Heart right ventricle (tissue), 16 donors: ENCODE measurements at regions of chr3 and their contacts with region 1.

Region 1: GRCh38 chr3:41893977-41894376 is 67.9 kb downstream of the ULK4 start:
- DNase-seq: peak in 1 of 2 donors; percentile 22
- ATAC-seq: no peak
- H3K4me3 ChIP-seq: no peak overlapping the region
- H3K27ac ChIP-seq: no peak overlapping the region
- H3K4me1 ChIP-seq: peaks cover 0 to 13% (median 0%) of the 10 kb centered on the region in 9 donors
- H3K27me3 ChIP-seq: no peaks in the 10 kb centered on the region
- CTCF ChIP-seq: peak in 8 of 9 donors; percentile 33 to 73 (median 60)

Region 2: DNA sequence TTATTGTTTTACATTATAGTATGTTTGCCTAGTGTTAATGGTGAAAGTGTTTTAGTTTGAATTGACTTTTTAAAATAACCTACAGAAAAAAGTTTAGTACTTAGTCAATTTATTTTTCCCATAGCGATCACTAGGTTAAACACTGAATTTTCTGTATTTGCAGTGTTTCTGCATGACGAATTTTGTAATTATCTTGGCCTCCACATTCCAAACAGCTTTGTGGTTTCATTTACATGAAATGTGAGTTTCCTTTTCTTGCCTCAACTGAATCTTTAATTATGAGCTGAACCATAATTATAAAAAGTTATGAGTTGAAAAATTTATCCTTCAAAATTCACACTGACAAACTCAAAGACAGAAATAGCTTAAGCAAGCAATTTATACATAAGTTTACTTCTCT is 459.2 kb before region 1 on chr3:
- intact Hi-C with region 1: no loop called
- DNase-seq: no peak
- ATAC-seq: no peak
- H3K4me3 ChIP-seq: no peak overlapping the region
- H3K27ac ChIP-seq: no peak overlapping the region
- H3K4me1 ChIP-seq: no peaks in the 10 kb centered on the region
- H3K27me3 ChIP-seq: no peaks in the 10 kb centered on the region
- CTCF ChIP-seq: no peak

Region 3: DNA sequence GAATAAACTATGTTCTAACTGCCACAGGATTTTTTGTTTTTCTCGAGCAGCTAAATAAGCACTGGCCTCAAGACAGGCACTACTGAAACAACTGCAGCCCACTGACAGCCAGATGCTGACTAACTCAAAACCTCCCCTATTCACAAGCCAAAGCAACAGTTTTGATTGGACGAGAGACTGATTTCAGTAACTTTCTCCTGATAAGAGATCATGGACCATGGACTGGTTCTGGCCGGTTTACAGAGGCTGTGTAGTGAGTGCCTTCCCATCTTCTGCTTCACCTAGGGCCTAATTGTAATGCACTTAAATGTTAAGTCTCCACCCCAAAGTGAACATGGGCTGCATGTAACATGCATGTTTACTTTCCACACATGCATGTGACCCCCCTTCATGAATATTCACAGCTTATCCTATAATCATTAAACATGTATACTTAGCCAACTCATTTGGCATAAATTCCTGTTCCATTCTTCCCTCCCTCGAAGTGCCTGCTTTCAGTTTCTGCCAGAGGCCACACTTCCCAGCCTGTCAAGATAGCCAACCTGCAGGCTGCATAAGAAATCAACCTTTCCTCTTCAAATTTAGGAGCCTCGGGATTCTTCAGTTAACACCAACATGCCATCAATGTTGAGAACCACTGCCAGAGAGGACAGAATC is 40.3 kb before region 1 on chr3:
- intact Hi-C with region 1: no loop called
- DNase-seq: no peak
- ATAC-seq: no peak
- H3K4me3 ChIP-seq: no peak overlapping the region
- H3K27ac ChIP-seq: no peak overlapping the region
- H3K4me1 ChIP-seq: peaks cover 0 to 3% (median 0%) of the 10 kb centered on the region in 9 donors
- H3K27me3 ChIP-seq: no peaks in the 10 kb centered on the region
- CTCF ChIP-seq: no peak

Region 4: DNA sequence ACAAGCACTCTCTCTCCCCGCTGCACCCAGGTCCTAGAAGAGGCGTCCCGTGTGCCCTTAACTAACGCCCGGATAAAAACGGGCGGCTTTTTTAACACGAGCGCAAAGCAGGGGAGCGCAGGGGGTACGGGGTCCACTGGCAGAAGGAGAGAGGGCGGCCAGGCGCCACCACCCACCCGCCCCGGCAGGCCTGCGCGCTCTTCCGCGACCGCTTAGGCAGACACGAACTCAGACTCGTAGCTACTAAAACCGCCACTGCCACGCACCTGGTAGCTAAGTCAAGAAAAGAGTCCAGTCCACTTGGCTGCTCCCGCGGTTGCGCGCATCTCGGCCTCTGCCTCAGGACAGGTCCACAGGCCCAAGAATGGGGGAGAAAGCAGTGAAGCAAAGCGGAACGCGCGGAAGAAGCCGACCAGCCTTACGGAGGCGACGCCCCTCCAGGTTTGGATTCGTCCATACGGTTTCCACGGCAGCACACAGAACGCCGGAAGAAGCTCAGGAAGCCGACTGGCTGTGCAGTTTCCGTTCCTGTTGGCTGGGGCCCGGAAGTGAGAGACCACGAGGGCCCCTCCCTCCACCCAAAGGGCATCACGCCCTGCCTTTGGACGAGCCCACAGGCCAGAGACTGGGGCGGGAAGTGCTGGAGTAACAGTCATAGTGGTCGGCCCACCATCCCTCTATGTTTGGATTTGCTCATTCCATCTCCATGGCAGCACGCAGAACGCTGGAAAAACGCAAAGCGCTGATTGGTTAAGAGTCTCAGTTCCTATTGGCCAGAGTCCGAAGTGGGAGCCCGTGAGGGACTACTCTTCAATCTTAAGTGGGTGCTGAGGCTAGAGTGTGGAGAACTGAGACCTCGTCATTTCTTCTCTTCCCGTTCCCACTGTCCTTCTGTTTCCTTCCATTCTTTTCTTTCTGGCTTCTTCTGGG is 68.0 kb after region 1 on chr3 and contains the start of gene ULK4:
- intact Hi-C with region 1: no loop called
- DNase-seq: peak; percentile 95 to 98
- ATAC-seq: peak; percentile 97 to 99 (median 98)
- H3K4me3 ChIP-seq: peak within 1 kb of the TSS; percentile 78 to 97 (median 93)
- H3K27ac ChIP-seq: peak within 1 kb of the TSS in 9 of 10 donors; percentile 46 to 87 (median 75)
- H3K4me1 ChIP-seq: peaks cover 0 to 18% (median 12%) of the 10 kb centered on the region in 9 donors
- H3K27me3 ChIP-seq: no peaks in the 10 kb centered on the region
- CTCF ChIP-seq: no peak
- total RNA-seq, gene ULK4: 1.8 to 11.4 (median 2.9) TPM

Region 5: GRCh38 chr3:42184651-42185443 is 290.9 kb after region 1 on chr3:
- intact Hi-C with region 1: loop called in 9 of 10 experiments (anchors 2 to 10 kb)
- DNase-seq: no peak
- ATAC-seq: no peak
- H3K4me3 ChIP-seq: no peak overlapping the region
- H3K27ac ChIP-seq: peak overlapping the region in 2 of 10 donors; percentile 9 to 30
- H3K4me1 ChIP-seq: peaks cover 0 to 87% (median 58%) of the 10 kb centered on the region in 9 donors
- H3K27me3 ChIP-seq: no peaks in the 10 kb centered on the region
- CTCF ChIP-seq: no peak

Region 6: DNA sequence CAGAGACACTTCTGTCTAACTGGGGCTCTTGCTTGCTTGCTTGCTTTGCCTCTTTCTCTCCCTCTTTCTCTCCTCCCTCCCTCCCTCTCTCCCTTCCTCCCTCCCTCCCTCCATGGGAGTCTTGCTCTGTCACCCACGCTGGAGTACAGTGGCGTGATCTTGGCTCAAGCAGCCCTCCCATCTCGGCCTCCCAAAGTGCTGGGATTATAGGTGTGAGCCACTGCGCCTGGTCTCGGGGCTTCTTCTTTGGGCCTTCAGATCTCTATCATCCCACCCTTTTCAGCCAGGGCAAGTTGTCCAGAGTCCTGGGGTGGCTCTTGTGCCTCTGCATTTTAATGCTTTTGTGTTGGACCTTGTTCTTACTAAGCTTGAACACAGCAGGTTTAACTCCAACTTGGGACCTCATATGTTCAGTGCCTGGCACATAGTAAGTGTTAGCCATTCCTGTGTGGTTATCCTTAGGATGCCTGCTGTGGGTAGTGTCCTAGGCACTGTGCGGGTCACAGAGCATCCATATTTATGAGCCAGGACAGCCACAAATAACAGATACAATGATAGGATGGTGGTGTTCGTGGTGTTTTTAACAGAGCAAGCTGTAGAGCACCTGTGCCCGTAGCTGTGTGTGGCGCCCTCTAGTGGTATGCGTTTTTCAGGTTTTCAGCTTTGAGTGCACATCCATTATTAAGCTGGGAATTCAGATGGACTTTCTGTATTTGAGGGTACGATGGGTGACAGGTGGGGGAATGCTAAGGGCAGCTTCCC is 296.9 kb after region 1 on chr3:
- intact Hi-C with region 1: loop called in 9 of 10 experiments (anchors 2 to 10 kb)
- DNase-seq: peak in 1 of 2 donors; percentile 72
- ATAC-seq: peak; percentile 34 to 69 (median 57)
- H3K4me3 ChIP-seq: no peak overlapping the region
- H3K27ac ChIP-seq: peak overlapping the region in 2 of 10 donors; percentile 5 to 67
- H3K4me1 ChIP-seq: peaks cover 0 to 71% (median 44%) of the 10 kb centered on the region in 9 donors
- H3K27me3 ChIP-seq: no peaks in the 10 kb centered on the region
- CTCF ChIP-seq: peak; percentile 79 to 90 (median 82)